PC-3 (cell line): ENCODE measurements at regions of chr2 and their contacts with region 1.

Region 1: DNA sequence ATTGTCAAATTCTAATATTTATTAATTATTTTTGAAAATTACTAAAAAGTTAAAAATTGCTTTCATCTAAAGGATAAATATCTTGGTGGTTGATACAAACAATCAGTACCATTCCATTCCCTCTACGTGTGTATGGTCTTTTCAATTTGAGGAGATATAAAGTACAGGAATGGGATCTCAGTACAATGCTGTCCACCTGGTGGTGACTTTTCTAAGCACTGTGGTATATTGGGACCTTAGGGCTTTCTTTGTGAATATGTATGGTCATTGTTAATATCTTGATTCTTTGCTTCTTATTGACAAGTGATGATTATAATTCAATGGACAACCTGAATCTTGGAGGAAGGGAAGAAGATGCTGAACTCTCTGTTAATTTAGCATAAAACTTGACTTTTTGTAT is 83.1 kb downstream of the NBEAL1 start:
- DNase-seq: peak; percentile 46
- ATAC-seq: peak; percentile 71
- H3K4me3 ChIP-seq: no peak overlapping the region
- H3K27ac ChIP-seq: no peak overlapping the region
- H3K4me1 ChIP-seq: no peaks in the 10 kb centered on the region
- H3K27me3 ChIP-seq: no peaks in the 10 kb centered on the region
- CTCF ChIP-seq: peak; percentile 60

Region 2: GRCh38 chr2:202831242-202832220 is 266.2 kb before region 1 on chr2:
- CTCF ChIA-PET with region 1: no interaction called
- POLR2A ChIA-PET with region 1: no interaction called
- intact Hi-C with region 1: loop called (anchors 1 kb)
- DNase-seq: peak; percentile 86
- ATAC-seq: peak; percentile 97
- H3K4me3 ChIP-seq: peak overlapping the region; percentile 38
- H3K27ac ChIP-seq: no peak overlapping the region
- H3K4me1 ChIP-seq: peaks cover 6% of the 10 kb centered on the region
- H3K27me3 ChIP-seq: no peaks in the 10 kb centered on the region
- CTCF ChIP-seq: peak; percentile 95

Region 3: DNA sequence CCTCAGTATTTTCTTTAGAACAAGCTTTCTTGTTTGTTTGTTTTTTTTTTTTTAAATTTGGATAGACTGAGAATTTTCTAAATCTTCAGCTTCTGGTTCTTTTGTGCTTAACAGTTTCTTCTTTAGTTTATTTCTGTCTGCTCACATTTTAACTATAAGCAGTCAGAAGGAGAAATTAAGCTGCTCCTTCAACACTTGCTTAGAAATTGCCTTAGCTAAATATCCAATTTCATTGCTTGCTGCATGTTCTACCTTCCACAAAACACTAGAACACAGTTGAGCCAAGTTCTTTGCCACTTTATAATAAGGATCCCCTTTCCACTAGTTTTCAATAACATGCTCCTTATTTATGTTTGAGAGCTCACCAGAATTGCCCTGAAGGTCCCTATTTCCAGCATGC is 25.4 kb before region 1 on chr2:
- CTCF ChIA-PET with region 1: no interaction called
- POLR2A ChIA-PET with region 1: no interaction called
- intact Hi-C with region 1: no loop called
- DNase-seq: no peak
- ATAC-seq: no peak
- H3K4me3 ChIP-seq: no peak overlapping the region
- H3K27ac ChIP-seq: no peak overlapping the region
- H3K4me1 ChIP-seq: no peaks in the 10 kb centered on the region
- H3K27me3 ChIP-seq: no peaks in the 10 kb centered on the region
- CTCF ChIP-seq: no peak

Region 4: DNA sequence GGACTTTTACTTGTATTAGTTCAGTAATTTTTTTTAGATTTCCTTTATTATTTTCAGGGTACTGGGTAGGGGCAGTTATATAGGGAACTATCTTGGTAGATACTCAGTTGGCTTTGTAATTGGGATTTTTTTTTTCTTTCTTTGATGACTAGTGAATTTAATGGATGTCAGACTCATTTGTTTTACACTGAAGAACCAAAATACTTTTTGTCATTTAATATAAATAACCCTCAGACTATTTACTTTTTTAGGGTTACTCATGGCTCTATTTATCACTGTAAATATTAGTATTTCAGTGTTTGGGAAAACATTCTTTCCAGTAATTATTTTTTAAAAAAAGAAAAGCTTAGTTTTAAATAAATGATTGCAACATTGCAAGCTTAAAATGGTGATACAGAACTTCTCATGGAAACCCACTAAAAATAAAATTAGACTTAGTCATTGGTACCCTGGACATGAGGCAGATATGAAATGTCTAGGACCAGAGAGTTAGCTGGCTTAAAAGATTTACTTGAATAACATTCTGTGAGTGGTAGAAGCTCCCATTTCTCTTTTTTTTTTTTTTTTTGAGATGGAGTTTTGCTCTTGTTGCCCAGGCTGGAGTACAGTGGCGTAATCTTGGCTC is 66.7 kb after region 1 on chr2:
- CTCF ChIA-PET with region 1: no interaction called
- POLR2A ChIA-PET with region 1: no interaction called
- intact Hi-C with region 1: no loop called
- DNase-seq: peak; percentile 5
- ATAC-seq: peak; percentile 50
- H3K4me3 ChIP-seq: no peak overlapping the region
- H3K27ac ChIP-seq: no peak overlapping the region
- H3K4me1 ChIP-seq: no peaks in the 10 kb centered on the region
- H3K27me3 ChIP-seq: no peaks in the 10 kb centered on the region
- CTCF ChIP-seq: no peak